Common myeloid progenitor, CD34-positive (primary cell): ENCODE measurements at regions of chr9 and their contacts with region 1.

Region 1: DNA sequence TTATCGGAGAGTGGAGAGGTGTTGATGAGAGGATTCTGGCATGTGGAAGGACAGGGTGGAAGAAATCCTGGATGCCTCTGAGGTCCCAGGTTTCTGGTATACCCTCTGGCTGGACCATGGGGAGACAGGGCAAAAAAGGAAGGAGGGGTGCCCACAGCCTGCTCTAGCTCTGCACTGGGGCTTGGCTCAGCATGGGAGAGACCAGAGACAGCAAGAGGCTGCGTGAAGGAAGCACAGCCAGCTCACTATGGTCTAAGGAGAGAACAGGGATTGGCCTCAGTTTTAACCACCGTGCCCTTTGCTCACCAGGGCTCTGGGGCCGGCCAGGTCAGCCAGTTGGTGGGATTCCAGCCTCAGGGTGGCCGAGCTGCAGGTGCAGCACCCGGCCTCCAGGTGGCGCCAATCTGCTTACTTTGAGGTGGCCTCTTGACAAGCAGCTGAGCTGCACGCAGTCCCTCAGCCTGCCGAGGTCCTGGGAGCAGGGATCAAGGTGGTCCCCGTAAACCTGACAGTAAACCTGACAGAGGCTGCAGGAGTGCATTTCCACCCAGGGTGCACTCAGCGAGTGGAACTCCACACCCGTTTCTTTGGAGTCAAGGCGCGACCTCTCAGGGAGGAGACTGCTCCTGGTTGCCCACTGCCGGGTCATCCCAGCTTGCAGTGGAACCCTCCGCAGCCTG is 25.0 kb upstream of the SPTLC1 start:
- DNase-seq: peak; percentile 46 to 68 (median 67)
- H3K4me3 ChIP-seq: peak overlapping the region in 2 of 7 experiments; percentile 35 to 59
- H3K27ac ChIP-seq: no peak overlapping the region
- H3K4me1 ChIP-seq: peaks cover 0 to 13% (median 12%) of the 10 kb centered on the region in 4 experiments
- H3K27me3 ChIP-seq: peaks cover 0 to 28% (median 13%) of the 10 kb centered on the region in 5 experiments

Region 2: DNA sequence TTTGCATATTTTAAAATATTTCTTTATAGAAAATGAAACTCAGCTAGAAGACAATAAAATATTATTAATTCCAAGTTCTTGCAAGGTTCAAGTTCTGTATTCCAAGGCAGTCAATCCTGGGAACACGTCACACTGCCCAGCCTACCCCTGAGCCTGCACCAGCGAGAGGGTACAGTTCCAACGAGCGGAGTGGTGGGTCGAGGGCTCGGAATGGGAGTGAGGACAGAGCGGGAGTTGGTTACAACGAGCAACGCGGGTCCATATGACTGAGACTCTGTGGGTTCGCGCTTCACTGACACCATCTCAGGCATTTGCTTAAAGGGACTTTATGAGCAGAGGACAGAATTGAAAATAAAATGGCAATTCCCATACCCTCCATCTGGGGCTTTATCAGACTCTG is 15.0 kb after region 1 on chr9:
- CTCF ChIA-PET with region 1: interaction called, 13 read pairs
- POLR2A ChIA-PET with region 1: no interaction called
- DNase-seq: no peak
- H3K4me3 ChIP-seq: no peak overlapping the region
- H3K27ac ChIP-seq: no peak overlapping the region
- H3K4me1 ChIP-seq: peaks cover 0 to 11% (median 3%) of the 10 kb centered on the region in 4 experiments
- H3K27me3 ChIP-seq: no peaks in the 10 kb centered on the region

Region 3: DNA sequence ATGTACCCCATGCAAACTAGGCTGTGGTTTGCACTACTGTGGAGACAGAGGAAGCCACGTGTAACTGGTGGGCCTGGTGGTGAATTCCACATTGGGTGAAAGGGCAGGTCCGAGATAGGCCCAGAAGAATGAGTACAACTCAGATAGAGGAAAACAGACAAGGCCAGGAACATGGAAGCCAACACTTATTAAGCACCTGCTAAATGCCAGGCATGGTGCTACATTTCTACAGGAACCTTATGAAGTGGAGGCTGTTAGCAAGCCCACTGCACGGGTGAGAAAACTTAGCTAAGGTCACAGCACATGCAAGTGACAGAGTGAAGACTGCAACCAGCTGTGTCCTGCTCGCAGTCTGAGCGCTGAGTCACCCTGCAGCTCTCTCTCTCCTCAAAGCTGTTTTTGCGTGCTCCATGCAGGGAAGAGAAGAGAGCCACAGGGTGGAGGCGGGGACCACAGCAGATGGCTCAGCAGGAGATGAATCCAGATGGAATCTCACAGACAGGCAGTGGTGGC is 40.5 kb after region 1 on chr9:
- CTCF ChIA-PET with region 1: interaction called, 23 read pairs
- POLR2A ChIA-PET with region 1: no interaction called
- DNase-seq: peak; percentile 23 to 87 (median 79)
- H3K4me3 ChIP-seq: no peak overlapping the region
- H3K27ac ChIP-seq: no peak overlapping the region
- H3K4me1 ChIP-seq: peaks cover 3 to 14% (median 13%) of the 10 kb centered on the region in 4 experiments
- H3K27me3 ChIP-seq: no peaks in the 10 kb centered on the region

Region 4: DNA sequence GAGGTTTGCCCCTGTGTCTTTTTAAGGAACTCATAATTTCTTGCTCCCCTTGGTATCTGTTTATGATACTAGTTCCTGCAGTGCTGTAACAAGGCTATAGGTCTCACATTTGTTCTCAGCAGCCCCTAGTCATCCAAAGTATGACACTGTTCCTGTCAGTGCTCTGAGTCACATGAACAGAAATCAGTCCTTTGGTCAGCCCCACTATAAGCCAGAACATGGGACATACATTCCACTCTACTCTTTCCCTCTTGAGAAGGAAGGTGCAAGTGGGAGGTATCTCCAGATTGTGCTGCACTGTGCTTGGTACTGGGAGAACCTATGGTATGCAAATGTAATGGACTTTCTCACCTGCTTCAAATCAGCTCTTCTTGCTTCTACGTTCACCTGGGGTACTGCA is 66.3 kb after region 1 on chr9:
- CTCF ChIA-PET with region 1: interaction called, 22 read pairs
- POLR2A ChIA-PET with region 1: no interaction called
- DNase-seq: no peak
- H3K4me3 ChIP-seq: no peak overlapping the region
- H3K27ac ChIP-seq: no peak overlapping the region
- H3K4me1 ChIP-seq: no peaks in the 10 kb centered on the region
- H3K27me3 ChIP-seq: no peaks in the 10 kb centered on the region

Region 5: GRCh38 chr9:92223758-92224157 is 83.5 kb after region 1 on chr9:
- CTCF ChIA-PET with region 1: interaction called, 23 read pairs
- POLR2A ChIA-PET with region 1: no interaction called
- DNase-seq: no peak
- H3K4me3 ChIP-seq: no peak overlapping the region
- H3K27ac ChIP-seq: no peak overlapping the region
- H3K4me1 ChIP-seq: no peaks in the 10 kb centered on the region
- H3K27me3 ChIP-seq: no peaks in the 10 kb centered on the region

Region 6: DNA sequence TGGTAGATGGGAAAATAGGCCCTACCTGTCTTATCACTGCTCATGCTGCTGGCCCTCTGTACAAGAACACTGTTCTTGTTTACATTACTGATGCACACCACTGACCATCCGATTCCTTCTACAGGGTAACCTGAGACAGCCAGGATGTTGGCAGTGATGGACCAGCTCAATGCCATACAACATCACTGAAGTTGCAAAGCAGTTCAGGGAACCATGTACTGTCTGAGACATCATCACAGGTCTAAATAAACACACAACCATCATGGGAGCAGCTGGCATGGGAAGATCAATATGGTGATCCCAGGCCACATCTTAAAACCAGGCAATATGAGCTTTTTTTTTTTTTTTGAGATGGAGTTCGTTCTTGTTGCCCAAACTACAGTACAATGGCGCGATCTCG is 94.3 kb after region 1 on chr9:
- CTCF ChIA-PET with region 1: interaction called, 191 read pairs
- POLR2A ChIA-PET with region 1: interaction called, 3 read pairs
- DNase-seq: no peak
- H3K4me3 ChIP-seq: no peak overlapping the region
- H3K27ac ChIP-seq: no peak overlapping the region
- H3K4me1 ChIP-seq: no peaks in the 10 kb centered on the region
- H3K27me3 ChIP-seq: no peaks in the 10 kb centered on the region

Region 7: GRCh38 chr9:92278110-92278509 is 137.9 kb after region 1 on chr9:
- CTCF ChIA-PET with region 1: interaction called, 16 read pairs
- POLR2A ChIA-PET with region 1: interaction called, 4 read pairs
- DNase-seq: no peak
- H3K4me3 ChIP-seq: no peak overlapping the region
- H3K27ac ChIP-seq: no peak overlapping the region
- H3K4me1 ChIP-seq: peaks cover 0 to 6% (median 5%) of the 10 kb centered on the region in 4 experiments
- H3K27me3 ChIP-seq: no peaks in the 10 kb centered on the region

Region 8: DNA sequence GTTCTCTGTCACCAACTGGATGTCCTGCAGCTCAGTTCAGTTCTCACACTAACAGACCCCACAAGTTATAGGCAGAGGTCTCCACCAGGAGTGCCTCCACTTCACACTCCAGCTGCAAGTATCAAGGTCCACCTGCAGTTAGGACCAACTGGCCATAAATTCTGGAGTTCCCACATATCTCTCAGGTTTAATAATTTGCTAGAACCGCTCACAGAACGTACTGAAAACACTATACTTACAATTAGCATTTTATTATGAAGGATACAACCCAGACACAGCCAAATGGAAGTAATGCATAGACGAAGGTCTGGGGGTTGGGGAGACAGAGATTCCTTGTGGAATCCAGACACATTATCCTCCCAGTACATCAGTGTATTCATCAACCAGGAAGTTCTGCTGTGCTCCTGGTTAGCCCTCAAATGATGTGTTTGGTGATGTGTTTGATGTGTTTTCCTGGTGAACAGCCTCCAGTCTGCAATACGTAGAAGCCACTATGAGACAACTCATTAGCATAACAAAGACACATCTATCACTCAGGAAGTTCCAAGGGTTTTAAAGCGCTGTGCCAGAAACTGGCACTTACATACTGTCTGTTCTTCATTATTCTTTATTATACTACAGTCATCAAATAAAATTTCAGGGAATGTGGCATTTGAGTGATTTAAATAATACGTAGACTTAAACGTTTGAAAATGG is 238.8 kb after region 1 on chr9:
- CTCF ChIA-PET with region 1: no interaction called
- POLR2A ChIA-PET with region 1: no interaction called
- DNase-seq: no peak
- H3K4me3 ChIP-seq: no peak overlapping the region
- H3K27ac ChIP-seq: no peak overlapping the region
- H3K4me1 ChIP-seq: peaks cover 0 to 13% (median 7%) of the 10 kb centered on the region in 4 experiments
- H3K27me3 ChIP-seq: no peaks in the 10 kb centered on the region